Activated CD8-positive, alpha-beta memory T cell treated with anti-CD3 and anti-CD28 coated beads, Interleukin-2, amount 10 ng/mL, durations not matched to agents 7 days and 5 days (primary cell): ENCODE measurements at regions of chr1 and their contacts with region 1.

Region 1: DNA sequence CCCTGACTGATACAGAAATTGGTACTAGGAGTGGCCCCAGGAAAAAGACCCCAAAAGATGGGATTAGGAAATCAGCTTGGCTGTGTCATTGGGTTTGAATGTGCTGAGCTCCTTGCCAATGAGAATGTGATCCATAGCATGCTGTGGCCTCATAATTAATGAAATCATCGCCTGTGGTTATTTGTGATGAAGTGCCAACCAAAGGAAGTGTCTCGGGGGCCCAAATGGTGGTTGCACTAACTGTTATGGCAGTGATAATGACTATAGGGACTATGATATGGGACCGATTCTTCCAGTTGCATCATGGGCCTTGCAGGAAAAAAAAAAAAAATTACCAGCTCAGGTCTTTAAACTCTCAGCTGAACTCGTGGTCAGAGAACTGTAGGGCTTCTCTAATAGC is 15.4 kb upstream of the ZDHHC18 start:
- DNase-seq: no peak
- ATAC-seq: peak; percentile 23
- H3K4me3 Mint-ChIP-seq: no peak overlapping the region
- H3K27ac Mint-ChIP-seq: peak overlapping the region; percentile 43
- H3K4me1 Mint-ChIP-seq: peaks cover 28% of the 10 kb centered on the region
- H3K27me3 Mint-ChIP-seq: no peaks in the 10 kb centered on the region

Region 2: DNA sequence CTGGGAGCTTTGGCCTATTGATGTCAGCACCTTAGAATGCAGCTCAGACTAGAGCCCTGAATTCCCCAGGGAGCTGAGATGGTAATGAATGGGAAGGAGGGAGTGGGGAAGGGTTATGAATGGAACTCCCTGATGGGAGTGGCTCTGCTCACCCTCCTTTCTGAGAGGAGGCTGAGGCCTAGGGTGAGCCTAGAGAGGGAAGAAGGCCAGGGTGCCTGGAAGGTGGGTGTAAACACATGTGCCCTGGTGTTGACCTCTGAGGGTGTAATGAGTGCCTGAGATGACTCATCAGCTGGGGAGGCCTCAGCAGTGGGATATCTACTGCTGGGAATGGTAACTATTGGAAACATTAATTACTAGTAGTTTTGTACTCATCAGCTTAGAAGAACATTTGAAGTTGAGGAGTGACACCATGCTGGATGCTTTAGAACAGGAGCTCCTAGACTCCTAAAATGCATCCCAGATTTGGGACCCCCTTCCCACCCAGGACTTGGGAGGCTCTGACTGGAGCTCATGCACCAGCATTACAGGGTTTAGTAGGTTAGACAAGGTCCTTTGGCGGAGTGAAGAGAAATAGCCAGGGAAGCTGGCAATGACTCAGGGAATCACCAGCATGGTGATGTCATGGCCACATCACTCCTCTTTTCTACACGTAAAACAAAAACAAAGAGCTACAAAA is 39.3 kb before region 1 on chr1:
- CTCF ChIA-PET with region 1: no interaction called
- DNase-seq: no peak
- ATAC-seq: peak; percentile 33
- H3K4me3 Mint-ChIP-seq: no peak overlapping the region
- H3K27ac Mint-ChIP-seq: peak overlapping the region; percentile 2
- H3K4me1 Mint-ChIP-seq: peaks cover 20% of the 10 kb centered on the region
- H3K27me3 Mint-ChIP-seq: no peaks in the 10 kb centered on the region

Region 3: DNA sequence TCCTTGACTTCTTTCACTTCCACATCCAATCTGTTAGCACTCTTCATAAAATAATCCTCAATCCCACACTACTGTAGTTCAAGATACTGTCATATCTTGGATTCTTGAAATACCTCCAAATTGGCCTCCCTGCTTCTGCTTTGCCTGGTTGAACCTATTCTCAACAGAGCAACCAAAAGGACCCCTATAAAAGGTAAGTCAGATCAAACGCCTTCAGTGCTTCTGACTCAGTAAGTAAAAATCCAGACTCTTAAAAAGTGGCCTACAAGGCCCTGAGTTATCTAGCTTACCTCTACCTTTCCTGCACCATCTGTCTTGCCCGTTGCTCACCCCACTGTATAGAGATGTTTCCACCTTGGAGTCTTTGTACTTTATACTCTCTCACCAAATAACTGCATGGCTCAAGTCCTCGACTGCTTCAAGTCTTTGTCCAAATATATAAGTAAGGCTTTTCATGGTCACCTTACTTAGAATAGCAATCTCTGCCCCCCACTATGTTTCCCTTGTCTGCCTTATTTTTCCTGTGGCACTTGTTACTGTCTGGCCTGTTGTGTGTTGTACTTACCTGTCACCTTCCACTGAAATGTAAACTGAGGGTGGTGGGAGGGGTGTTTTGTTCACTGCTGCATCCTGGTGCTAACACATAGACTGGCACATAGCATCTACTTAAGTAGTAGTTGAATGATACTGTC is 28.4 kb before region 1 on chr1:
- CTCF ChIA-PET with region 1: no interaction called
- DNase-seq: no peak
- ATAC-seq: no peak
- H3K4me3 Mint-ChIP-seq: no peak overlapping the region
- H3K27ac Mint-ChIP-seq: no peak overlapping the region
- H3K4me1 Mint-ChIP-seq: peaks cover 29% of the 10 kb centered on the region
- H3K27me3 Mint-ChIP-seq: peaks cover 2% of the 10 kb centered on the region

Region 4: GRCh38 chr1:26799479-26800142 is 11.4 kb before region 1 on chr1:
- CTCF ChIA-PET with region 1: interaction called, 74 read pairs
- DNase-seq: peak; percentile 63
- ATAC-seq: peak; percentile 76
- H3K4me3 Mint-ChIP-seq: peak overlapping the region; percentile 56
- H3K27ac Mint-ChIP-seq: peak overlapping the region; percentile 97
- H3K4me1 Mint-ChIP-seq: peaks cover 47% of the 10 kb centered on the region
- H3K27me3 Mint-ChIP-seq: no peaks in the 10 kb centered on the region

Region 5: GRCh38 chr1:26833432-26834405 is 22.7 kb after region 1 on chr1:
- CTCF ChIA-PET with region 1: interaction called, 53 read pairs
- DNase-seq: peak; percentile 98
- ATAC-seq: peak; percentile 97
- H3K4me3 Mint-ChIP-seq: peak overlapping the region; percentile 56
- H3K27ac Mint-ChIP-seq: peak overlapping the region; percentile 96
- H3K4me1 Mint-ChIP-seq: peaks cover 75% of the 10 kb centered on the region
- H3K27me3 Mint-ChIP-seq: no peaks in the 10 kb centered on the region

Region 6: DNA sequence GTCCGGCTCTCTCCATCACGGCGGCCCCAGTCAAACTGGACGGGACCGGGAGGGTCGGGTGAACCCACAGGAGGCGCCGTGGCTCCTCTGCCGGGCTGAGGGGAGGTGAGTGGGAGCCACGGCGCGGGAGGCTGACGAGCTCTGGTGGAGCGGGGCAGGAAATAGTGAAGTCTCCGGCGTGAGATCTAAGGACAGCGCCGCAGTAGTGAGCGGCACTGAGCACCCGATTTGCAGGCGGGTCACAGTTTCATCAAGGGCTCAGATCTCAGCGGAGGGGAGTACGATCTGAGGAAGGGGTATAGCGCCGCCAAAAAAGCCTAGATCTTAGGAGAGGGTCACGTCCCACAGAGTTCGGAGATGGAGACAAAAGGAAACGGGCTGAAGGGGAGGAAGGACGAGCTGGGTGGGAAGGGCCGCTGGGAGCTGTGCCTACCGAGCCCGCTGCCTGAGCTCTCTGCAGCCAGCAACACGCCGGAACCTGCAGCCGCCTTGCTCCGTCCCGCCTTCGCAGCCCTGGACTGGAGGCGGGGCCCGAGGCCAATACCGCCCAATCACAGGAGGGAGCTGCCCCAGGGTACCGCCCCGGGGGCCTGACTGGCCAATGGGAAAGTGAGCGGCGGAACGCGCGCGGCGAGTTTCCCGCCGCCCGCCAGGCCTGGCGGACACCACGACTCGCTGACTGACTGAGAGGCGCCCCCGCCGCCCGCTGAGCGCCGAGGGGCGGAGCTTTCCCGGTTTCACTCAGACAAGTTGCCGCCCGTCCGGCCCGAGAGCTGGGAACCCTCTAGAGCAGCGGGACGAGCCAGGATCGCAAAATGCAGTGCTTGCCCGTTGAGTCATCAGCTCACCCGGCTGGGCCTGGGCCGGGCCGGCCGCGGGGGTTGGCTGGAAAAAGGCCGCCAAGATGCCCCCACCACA is 53.8 kb after region 1 on chr1:
- CTCF ChIA-PET with region 1: interaction called, 10 read pairs
- DNase-seq: peak; percentile 97
- ATAC-seq: peak; percentile 95
- H3K4me3 Mint-ChIP-seq: peak overlapping the region; percentile 84
- H3K27ac Mint-ChIP-seq: peak overlapping the region; percentile 87
- H3K4me1 Mint-ChIP-seq: peaks cover 29% of the 10 kb centered on the region
- H3K27me3 Mint-ChIP-seq: no peaks in the 10 kb centered on the region

Region 7: GRCh38 chr1:26889551-26890466 is 78.8 kb after region 1 on chr1 and contains the start of gene GPN2:
- CTCF ChIA-PET with region 1: interaction called, 10 read pairs
- DNase-seq: peak; percentile 88
- ATAC-seq: peak; percentile 98
- H3K4me3 Mint-ChIP-seq: peak within 1 kb of the TSS; percentile 92
- H3K27ac Mint-ChIP-seq: peak within 1 kb of the TSS; percentile 91
- H3K4me1 Mint-ChIP-seq: peaks cover 32% of the 10 kb centered on the region
- H3K27me3 Mint-ChIP-seq: no peaks in the 10 kb centered on the region
- total RNA-seq, gene GPN2: 32.9 to 41.1 TPM